Naive thymus-derived CD4-positive, alpha-beta T cell (primary cell): ENCODE measurements at regions of chr4 and their contacts with region 1.

Region 1: GRCh38 chr4:15805583-15806517 is 27.7 kb downstream of the CD38 start:
- DNase-seq: peak in 7 of 9 donors; percentile 37 to 64 (median 52)
- ATAC-seq: peak; percentile 80
- H3K4me3 ChIP-seq: no peak overlapping the region
- H3K4me3 Mint-ChIP-seq: no peak overlapping the region
- H3K27ac ChIP-seq: no peak overlapping the region
- H3K27ac Mint-ChIP-seq: peak overlapping the region in 3 of 9 donors; percentile 21 to 78 (median 60)
- H3K4me1 ChIP-seq: peaks cover 0 to 4% of the 10 kb centered on the region in 2 donors
- H3K4me1 Mint-ChIP-seq: peaks cover 26 to 76% (median 43%) of the 10 kb centered on the region in 7 donors
- H3K27me3 ChIP-seq: no peaks in the 10 kb centered on the region
- H3K27me3 Mint-ChIP-seq: no peaks in the 10 kb centered on the region

Region 2: DNA sequence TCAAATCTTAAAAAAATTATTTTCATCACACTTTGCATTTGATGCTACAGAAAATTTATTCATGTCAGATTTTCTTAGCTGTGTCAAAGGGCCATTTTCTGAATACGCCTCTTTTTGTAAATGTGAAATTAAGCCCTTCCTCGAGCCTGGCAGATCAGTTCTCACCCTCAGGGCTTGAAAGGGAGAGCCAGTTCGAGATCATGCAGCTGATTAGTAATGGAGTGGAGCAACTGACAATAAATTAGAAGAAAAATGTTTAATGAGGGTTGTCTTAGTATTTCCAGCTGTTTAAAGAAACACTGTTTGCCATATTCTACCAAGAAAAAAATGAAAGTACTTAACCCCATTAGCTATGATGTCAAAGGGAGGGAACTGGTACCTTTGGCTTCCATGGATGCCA is 307.5 kb before region 1 on chr4:
- CTCF ChIA-PET with region 1: no interaction called
- POLR2A ChIA-PET with region 1: no interaction called
- intact Hi-C with region 1: no loop called
- DNase-seq: no peak
- ATAC-seq: no peak
- H3K4me3 ChIP-seq: no peak overlapping the region
- H3K4me3 Mint-ChIP-seq: no peak overlapping the region
- H3K27ac ChIP-seq: no peak overlapping the region
- H3K27ac Mint-ChIP-seq: no peak overlapping the region
- H3K4me1 ChIP-seq: no peaks in the 10 kb centered on the region
- H3K4me1 Mint-ChIP-seq: no peaks in the 10 kb centered on the region
- H3K27me3 ChIP-seq: no peaks in the 10 kb centered on the region
- H3K27me3 Mint-ChIP-seq: peaks cover 0 to 13% (median 5%) of the 10 kb centered on the region in 5 donors

Region 3: DNA sequence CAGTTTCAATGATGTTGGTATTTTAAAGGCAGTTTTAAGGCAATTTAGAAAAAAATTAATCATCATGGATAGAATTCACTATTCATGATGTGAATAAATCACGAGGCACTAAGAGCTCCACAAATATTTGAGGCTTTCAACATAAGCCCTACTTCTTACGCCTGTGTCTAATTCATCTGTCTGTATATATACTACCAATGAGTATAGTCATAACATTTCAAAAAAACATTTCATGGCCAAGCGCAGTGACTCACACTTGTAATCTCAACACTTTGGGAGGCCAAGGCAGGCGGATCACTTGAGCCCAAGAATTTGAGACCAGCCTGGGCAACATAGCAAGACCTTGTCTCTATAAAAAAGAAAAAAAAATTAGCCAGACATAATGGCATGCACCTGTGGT is 207.2 kb before region 1 on chr4:
- CTCF ChIA-PET with region 1: no interaction called
- POLR2A ChIA-PET with region 1: no interaction called
- intact Hi-C with region 1: no loop called
- DNase-seq: no peak
- ATAC-seq: no peak
- H3K4me3 ChIP-seq: no peak overlapping the region
- H3K4me3 Mint-ChIP-seq: no peak overlapping the region
- H3K27ac ChIP-seq: no peak overlapping the region
- H3K27ac Mint-ChIP-seq: no peak overlapping the region
- H3K4me1 ChIP-seq: no peaks in the 10 kb centered on the region
- H3K4me1 Mint-ChIP-seq: no peaks in the 10 kb centered on the region
- H3K27me3 ChIP-seq: no peaks in the 10 kb centered on the region
- H3K27me3 Mint-ChIP-seq: no peaks in the 10 kb centered on the region

Region 4: GRCh38 chr4:15882675-15883086 is 76.8 kb after region 1 on chr4:
- CTCF ChIA-PET with region 1: interaction called, 3 read pairs
- POLR2A ChIA-PET with region 1: no interaction called
- intact Hi-C with region 1: loop called (anchors 1 to 2 kb)
- DNase-seq: peak in 7 of 9 donors; percentile 22 to 52 (median 41)
- ATAC-seq: peak; percentile 89
- H3K4me3 ChIP-seq: no peak overlapping the region
- H3K4me3 Mint-ChIP-seq: no peak overlapping the region
- H3K27ac ChIP-seq: no peak overlapping the region
- H3K27ac Mint-ChIP-seq: peak overlapping the region in 1 of 9 donors; percentile 2
- H3K4me1 ChIP-seq: no peaks in the 10 kb centered on the region
- H3K4me1 Mint-ChIP-seq: peaks cover 0 to 13% (median 0%) of the 10 kb centered on the region in 7 donors
- H3K27me3 ChIP-seq: no peaks in the 10 kb centered on the region
- H3K27me3 Mint-ChIP-seq: peaks cover 0 to 20% (median 4%) of the 10 kb centered on the region in 5 donors